ENCODE measurements at regions of chr3 and their contacts with region 1.

Region 1: DNA sequence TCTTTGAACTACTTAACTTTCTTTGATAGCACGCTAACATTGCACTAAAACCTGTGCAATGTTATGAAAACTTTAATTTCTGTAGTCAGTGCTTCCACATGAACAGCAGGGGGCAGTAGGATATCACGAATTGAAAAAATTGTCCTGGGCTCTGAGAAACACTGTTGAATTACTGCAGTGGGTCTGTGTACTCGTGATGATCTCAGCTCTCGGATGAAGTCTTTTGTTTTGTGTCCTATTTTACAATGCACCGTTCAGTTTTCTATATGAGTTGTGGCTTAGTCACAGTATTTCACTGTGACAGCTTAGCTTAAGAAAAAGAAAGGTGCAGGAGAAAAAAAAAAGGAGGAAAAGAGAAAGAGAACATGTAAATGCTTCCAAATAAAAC is 141.3 kb upstream of the CCDC54 start:
- DNase-seq: peak in 1 of 2 donors; percentile 4
- ATAC-seq: peak; percentile 82 to 85
- H3K4me3 ChIP-seq: peak overlapping the region; percentile 54 to 66 (median 58)
- H3K27ac ChIP-seq: peak overlapping the region; percentile 26 to 42 (median 30)
- H3K4me1 ChIP-seq: peaks cover 7 to 11% of the 10 kb centered on the region in 2 donors
- H3K27me3 ChIP-seq: no peaks in the 10 kb centered on the region
- CTCF ChIP-seq: peak; percentile 71 to 94 (median 87)
- POLR2A ChIP-seq: no peak

Region 2: GRCh38 chr3:106945435-106945834 is 290.5 kb before region 1 on chr3:
- in situ Hi-C with region 1: no loop called
- intact Hi-C with region 1: no loop called
- DNase-seq: no peak
- ATAC-seq: no peak
- H3K4me3 ChIP-seq: no peak overlapping the region
- H3K27ac ChIP-seq: no peak overlapping the region
- H3K4me1 ChIP-seq: no peaks in the 10 kb centered on the region
- H3K27me3 ChIP-seq: no peaks in the 10 kb centered on the region
- CTCF ChIP-seq: no peak
- POLR2A ChIP-seq: no peak

Region 3: DNA sequence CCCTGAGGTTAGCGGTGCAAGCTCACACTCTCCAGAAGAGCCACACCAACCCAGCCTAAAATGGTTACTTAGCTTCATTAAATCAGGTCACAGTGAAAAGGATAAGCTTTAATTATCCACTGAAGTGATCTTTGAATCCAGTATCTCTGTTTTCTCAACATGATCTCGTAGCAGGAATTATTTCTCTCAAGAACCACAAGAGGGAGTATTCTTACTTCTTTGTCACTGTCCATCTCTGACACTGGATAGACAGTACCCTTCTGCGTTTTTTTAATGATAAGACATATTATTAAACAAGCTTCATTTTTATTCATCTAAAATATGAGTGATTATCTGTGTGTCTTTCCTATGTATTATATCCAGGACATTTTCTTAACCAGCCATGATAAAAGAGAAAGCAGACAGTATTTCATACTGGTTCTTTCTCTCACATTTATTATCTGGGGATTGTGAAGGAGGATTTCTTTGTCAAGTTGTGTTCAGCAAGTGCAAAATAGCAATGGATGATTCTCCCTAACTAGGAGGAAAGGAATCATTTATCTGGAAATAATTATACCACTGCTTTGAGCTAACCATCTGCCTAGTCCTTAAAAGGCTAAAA is 36.0 kb after region 1 on chr3:
- in situ Hi-C with region 1: no loop called
- intact Hi-C with region 1: loop called (anchors 2 kb)
- DNase-seq: no peak
- ATAC-seq: peak; percentile 58 to 65
- H3K4me3 ChIP-seq: no peak overlapping the region
- H3K27ac ChIP-seq: no peak overlapping the region
- H3K4me1 ChIP-seq: no peaks in the 10 kb centered on the region
- H3K27me3 ChIP-seq: no peaks in the 10 kb centered on the region
- CTCF ChIP-seq: peak; percentile 39 to 60 (median 43)
- POLR2A ChIP-seq: no peak

Region 4: GRCh38 chr3:107522510-107523288 is 286.8 kb after region 1 on chr3 and contains the start of gene BBX:
- in situ Hi-C with region 1: loop called in 1 of 4 experiments (anchors 10 kb)
- intact Hi-C with region 1: loop called (anchors 1 kb)
- DNase-seq: peak; percentile 87 to 96
- ATAC-seq: peak; percentile 89 to 91
- H3K4me3 ChIP-seq: peak within 1 kb of the TSS; percentile 74 to 99 (median 94)
- H3K27ac ChIP-seq: peak within 1 kb of the TSS; percentile 94 to 97 (median 96)
- H3K4me1 ChIP-seq: peaks cover 9 to 19% of the 10 kb centered on the region in 2 donors
- H3K27me3 ChIP-seq: no peaks in the 10 kb centered on the region
- CTCF ChIP-seq: peak in 1 of 5 experiments; percentile 27
- POLR2A ChIP-seq: peak; percentile 65 to 90
- total RNA-seq, gene BBX: 15.2 to 48.3 (median 20.1) TPM

Region 5: GRCh38 chr3:107543666-107544065 is 307.7 kb after region 1 on chr3:
- in situ Hi-C with region 1: loop called in 2 of 4 experiments (anchors 10 kb)
- intact Hi-C with region 1: no loop called
- DNase-seq: no peak
- ATAC-seq: no peak
- H3K4me3 ChIP-seq: no peak overlapping the region
- H3K27ac ChIP-seq: no peak overlapping the region
- H3K4me1 ChIP-seq: no peaks in the 10 kb centered on the region
- H3K27me3 ChIP-seq: no peaks in the 10 kb centered on the region
- CTCF ChIP-seq: peak in 2 of 5 experiments; percentile 8 to 33
- POLR2A ChIP-seq: no peak

Region 6: DNA sequence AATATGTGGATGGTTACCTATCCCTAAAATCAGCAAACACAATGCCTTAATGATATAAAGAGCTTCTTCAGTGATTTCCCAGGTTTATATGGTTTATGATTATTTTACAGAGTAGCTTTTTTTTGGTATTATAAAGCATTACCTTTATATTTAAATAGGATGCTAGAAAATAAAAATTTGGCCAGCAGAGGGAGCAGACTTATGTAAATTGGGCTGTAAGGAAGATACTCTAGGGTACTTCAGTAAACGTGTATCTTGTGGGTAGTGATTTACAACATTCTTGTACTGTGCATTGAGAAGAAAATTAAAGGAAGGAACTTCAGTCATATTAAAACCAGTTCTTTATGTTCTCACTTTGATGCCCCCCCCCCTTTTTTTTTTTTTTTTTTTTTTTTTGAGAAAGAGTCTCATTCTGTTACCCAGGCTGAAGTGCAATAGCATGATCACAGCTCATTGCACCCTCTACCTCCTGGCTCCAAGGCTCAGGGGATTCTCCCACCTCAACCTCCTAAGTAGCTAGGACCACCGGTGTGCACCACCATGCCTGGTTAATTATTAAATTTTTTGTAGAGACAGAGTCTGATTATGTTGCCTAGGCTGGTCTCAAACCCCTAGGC is 454.7 kb after region 1 on chr3:
- in situ Hi-C with region 1: no loop called
- intact Hi-C with region 1: no loop called
- DNase-seq: no peak
- ATAC-seq: no peak
- H3K4me3 ChIP-seq: no peak overlapping the region
- H3K27ac ChIP-seq: no peak overlapping the region
- H3K4me1 ChIP-seq: no peaks in the 10 kb centered on the region
- H3K27me3 ChIP-seq: no peaks in the 10 kb centered on the region
- CTCF ChIP-seq: peak; percentile 27 to 54 (median 41)
- POLR2A ChIP-seq: no peak

Region 7: DNA sequence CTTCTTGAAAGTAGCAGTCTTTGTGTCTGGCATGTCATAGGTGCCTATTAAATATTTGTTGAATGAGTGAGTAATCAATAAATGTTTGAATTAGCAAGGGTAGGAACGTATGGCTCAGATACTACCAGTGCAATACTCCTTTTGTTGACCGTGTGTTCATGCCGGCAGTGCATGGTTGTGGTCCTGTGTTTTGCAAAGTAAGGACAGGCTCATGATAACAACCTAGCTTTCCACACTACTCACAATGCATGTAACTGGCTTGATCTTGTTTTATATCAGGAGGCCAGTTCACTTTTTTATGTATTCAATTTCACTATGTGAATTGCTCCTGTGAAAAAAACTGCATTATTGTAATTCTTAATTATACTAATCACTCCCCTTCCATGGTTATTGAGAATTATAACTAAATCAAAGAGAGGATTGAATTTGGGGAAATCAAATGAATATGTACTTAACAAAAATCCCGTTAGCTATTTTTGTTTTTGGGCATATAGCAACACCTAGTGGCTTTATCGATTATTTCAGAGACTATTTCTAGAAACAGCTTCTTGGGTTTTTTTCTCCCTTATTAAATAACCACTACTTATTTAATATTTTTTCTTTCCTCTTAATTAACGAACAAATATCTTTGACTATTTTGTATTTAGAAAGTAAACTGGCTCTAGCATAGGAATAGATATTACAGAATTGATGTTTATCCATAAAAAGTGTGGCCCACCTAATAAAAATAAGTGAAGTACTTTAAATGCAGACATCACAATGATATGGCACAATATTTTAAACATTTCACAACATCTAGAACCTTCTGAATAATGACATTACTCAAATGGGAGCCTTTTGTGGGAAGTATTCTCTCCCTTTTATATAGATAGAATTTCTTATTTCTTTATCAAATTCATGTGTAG is 505.3 kb after region 1 on chr3:
- in situ Hi-C with region 1: loop called in 2 of 4 experiments (anchors 10 to 25 kb)
- intact Hi-C with region 1: loop called (anchors 5 kb)
- DNase-seq: no peak
- ATAC-seq: no peak
- H3K4me3 ChIP-seq: no peak overlapping the region
- H3K27ac ChIP-seq: no peak overlapping the region
- H3K4me1 ChIP-seq: no peaks in the 10 kb centered on the region
- H3K27me3 ChIP-seq: no peaks in the 10 kb centered on the region
- CTCF ChIP-seq: peak; percentile 25 to 67 (median 59)
- POLR2A ChIP-seq: no peak

Region 8: DNA sequence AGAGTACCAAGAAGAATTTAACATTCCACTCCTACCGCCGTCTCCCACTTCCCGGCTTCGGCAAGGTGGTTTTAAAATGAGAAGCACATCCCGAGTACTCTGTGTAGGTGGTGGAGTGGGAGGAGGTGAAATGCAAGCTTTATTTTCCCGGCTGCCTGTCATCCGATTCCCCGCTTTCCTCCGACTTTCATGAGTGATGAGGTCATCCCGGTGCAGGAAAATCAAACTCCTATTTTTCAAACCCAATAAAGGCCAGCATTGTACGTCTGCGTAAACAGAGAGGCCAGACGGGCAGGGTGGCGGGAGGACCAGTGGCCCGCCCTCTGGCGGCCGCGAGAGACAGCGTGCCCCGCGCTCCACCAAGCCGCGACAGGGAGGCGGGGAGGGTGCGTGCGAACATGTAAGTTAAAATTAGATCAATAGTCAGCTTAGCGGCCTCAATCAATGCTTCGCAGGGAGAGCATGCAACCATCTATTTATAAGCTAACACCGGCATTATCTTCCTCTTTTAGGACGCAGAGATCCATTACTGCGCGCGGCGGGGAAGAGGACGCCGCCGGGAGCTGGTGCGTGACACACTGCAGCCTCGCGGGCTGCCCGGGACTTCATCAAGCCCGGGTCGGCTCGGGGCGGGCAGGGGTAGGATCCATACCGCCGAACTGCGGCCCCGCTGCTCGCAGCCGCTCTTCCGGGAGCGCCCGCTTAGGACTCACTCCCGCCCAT is 691.6 kb after region 1 on chr3:
- in situ Hi-C with region 1: loop called in 1 of 4 experiments (anchors 25 kb)
- intact Hi-C with region 1: loop called (anchors 5 kb)
- DNase-seq: peak; percentile 13 to 29
- ATAC-seq: peak; percentile 91 to 93
- H3K4me3 ChIP-seq: peak overlapping the region; percentile 55 to 76 (median 60)
- H3K27ac ChIP-seq: no peak overlapping the region
- H3K4me1 ChIP-seq: peaks cover 0 to 14% of the 10 kb centered on the region in 2 donors
- H3K27me3 ChIP-seq: no peaks in the 10 kb centered on the region
- CTCF ChIP-seq: peak; percentile 69 to 93 (median 78)
- POLR2A ChIP-seq: no peak

Region 9: DNA sequence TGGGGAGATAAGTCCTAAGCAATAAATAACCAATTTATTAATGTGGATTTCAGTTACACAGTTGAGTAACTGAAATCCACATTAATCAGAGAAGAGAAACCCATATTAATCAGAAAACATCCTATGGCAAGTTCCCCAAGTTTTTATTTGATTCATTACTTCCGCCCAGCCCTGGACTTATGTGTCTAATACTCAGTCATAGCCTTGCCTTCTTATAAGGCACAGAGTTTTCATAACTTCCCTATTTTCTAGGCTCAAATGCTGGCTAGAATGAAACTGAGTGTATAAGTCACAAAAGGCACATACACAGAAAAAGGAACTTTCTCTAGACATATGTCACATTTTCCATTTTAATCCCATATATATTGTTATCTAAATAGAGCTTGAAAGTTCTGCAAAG is 826.1 kb after region 1 on chr3:
- in situ Hi-C with region 1: no loop called
- intact Hi-C with region 1: no loop called
- DNase-seq: no peak
- ATAC-seq: no peak
- H3K4me3 ChIP-seq: no peak overlapping the region
- H3K27ac ChIP-seq: no peak overlapping the region
- H3K4me1 ChIP-seq: no peaks in the 10 kb centered on the region
- H3K27me3 ChIP-seq: no peaks in the 10 kb centered on the region
- CTCF ChIP-seq: no peak
- POLR2A ChIP-seq: no peak

Region 10: DNA sequence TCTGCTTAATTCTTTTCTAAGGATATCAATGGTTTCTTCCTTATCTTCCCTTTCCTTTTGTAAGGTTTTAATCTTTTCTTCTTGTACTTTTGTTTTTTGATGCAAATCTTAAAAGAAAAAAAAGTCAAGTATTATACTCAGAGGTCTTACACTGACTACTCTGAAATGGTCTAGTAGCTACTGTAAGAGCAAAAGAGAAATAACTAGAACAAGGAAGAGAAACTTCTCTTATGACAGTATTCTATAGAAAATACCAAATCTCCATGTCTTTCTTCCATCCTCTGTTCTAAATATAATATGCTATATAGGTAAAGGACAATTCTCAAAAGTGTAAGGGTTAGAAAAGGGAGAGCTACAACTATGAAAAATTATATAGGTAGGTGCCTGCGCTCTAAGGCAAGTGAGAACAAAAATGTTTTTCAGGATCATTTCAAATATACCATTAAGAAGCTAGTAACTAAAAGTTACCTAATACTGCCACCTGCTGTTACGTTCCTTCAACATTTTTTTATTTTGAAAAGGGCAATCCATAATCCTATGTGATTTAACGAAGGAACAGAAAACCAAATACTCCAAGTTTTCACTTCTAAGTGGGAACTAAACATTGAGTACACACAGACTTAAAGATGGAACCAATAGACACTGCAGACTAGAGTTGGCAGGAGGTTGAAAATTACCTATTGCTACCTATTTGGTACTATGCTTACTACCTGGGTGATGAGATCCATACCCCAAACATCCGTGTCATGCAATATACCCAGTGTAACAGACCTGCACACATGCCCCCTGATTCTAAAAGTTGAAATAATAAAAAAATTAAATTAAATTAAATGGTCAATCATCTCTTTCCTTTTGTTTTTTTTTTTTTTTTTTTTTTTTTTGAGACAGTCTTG is 1316.6 kb after region 1 on chr3:
- in situ Hi-C with region 1: no loop called
- intact Hi-C with region 1: loop called (anchors 5 kb)
- DNase-seq: no peak
- ATAC-seq: peak in 1 of 2 donors; percentile 60
- H3K4me3 ChIP-seq: no peak overlapping the region
- H3K27ac ChIP-seq: no peak overlapping the region
- H3K4me1 ChIP-seq: no peaks in the 10 kb centered on the region
- H3K27me3 ChIP-seq: no peaks in the 10 kb centered on the region
- CTCF ChIP-seq: peak; percentile 36 to 56 (median 44)
- POLR2A ChIP-seq: no peak

Measured in gastrocnemius medialis (tissue), 4 donors.